Transverse colon (tissue), 4 donors: ENCODE measurements at regions of chr16 and their contacts with region 1.

Region 1: GRCh38 chr16:4802659-4803287 is 340 bp upstream of the ROGDI start:
- DNase-seq: peak; percentile 93
- H3K4me3 ChIP-seq: peak overlapping the region; percentile 59 to 83 (median 78)
- H3K27ac ChIP-seq: peak overlapping the region; percentile 88 to 97 (median 93)
- H3K4me1 ChIP-seq: peaks cover 11 to 36% (median 30%) of the 10 kb centered on the region in 4 donors
- H3K27me3 ChIP-seq: no peaks in the 10 kb centered on the region
- CTCF ChIP-seq: peak in 4 of 5 experiments; percentile 14 to 54 (median 25)
- EP300 ChIP-seq: no peak
- POLR2A ChIP-seq: no peak

Region 2: DNA sequence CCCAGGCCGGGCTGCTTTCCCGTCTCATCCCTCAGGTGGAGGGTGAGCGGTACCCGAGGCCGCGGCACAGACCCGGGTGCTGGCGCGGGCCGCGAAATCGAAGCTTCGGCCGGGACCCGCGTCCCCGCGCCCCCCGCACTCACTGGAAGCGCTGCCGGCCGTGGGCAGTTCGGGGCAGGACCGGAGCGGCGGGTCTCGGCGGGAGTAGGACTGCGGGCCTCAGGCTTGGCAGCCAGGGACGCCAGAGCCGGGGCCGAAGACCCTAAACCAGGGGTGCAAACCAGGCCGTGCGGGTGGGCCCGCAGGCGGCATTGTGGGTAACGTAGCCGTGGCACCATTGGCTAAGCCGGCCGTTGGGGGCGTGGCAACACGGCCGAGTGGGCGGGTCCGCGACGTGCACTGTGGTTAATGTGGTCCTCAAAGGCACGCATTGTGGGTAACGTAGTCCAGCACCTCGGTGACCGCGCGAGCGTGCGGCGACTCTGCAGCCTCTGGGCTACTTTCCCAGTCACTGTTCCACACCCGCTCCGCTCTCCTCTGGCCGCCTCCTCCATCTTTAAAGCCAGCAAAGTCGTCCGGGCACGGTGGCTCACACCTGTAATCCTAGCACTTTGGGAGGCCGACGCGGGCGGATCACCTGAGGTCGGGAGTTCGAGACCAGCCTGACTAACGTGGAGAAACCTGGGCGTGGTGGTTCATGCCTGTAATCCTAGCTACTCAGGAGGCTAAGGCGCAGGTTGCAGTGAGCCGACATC is 35.7 kb before region 1 on chr16 and contains the start of gene ZNF500:
- in situ Hi-C with region 1: no loop called
- intact Hi-C with region 1: loop called (anchors 5 kb)
- DNase-seq: peak; percentile 99
- H3K4me3 ChIP-seq: peak within 1 kb of the TSS; percentile 73 to 96 (median 92)
- H3K27ac ChIP-seq: peak within 1 kb of the TSS; percentile 91 to 96 (median 93)
- H3K4me1 ChIP-seq: peaks cover 11 to 37% (median 26%) of the 10 kb centered on the region in 4 donors
- H3K27me3 ChIP-seq: no peaks in the 10 kb centered on the region
- CTCF ChIP-seq: no peak
- EP300 ChIP-seq: no peak
- POLR2A ChIP-seq: peak; percentile 69
- total RNA-seq, gene ZNF500: 9.7 to 31.2 (median 11.6) TPM

Region 3: DNA sequence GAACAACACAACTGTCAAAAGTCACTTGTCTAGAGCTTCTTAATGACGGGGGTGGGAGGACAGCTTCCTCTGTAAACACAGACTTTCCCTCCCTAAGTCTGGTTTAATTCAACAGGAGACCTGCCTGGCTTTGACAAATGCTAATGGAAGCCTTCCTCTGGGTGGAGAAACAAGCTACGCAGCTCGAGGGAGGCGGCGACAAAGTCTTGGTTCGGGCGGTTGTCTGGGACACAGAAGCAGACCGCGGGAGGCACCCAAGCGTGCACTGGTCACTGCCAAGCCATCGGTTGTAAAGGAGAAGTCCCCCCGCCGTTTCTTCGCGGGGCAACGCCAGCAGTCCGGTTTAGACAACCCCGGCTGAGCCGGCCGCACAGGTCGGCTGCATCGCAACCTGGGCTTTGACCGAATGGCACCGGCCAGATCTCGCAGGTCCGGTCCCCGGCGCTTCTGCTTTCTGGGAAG is 43.7 kb after region 1 on chr16:
- in situ Hi-C with region 1: no loop called
- intact Hi-C with region 1: no loop called
- DNase-seq: peak; percentile 71
- H3K4me3 ChIP-seq: peak overlapping the region; percentile 78 to 99 (median 90)
- H3K27ac ChIP-seq: peak overlapping the region; percentile 99 to 100 (median 100)
- H3K4me1 ChIP-seq: peaks cover 26 to 50% (median 39%) of the 10 kb centered on the region in 4 donors
- H3K27me3 ChIP-seq: no peaks in the 10 kb centered on the region
- CTCF ChIP-seq: no peak
- EP300 ChIP-seq: no peak
- POLR2A ChIP-seq: no peak